ENCODE measurements at regions of chr13 and their contacts with region 1.

Region 1: DNA sequence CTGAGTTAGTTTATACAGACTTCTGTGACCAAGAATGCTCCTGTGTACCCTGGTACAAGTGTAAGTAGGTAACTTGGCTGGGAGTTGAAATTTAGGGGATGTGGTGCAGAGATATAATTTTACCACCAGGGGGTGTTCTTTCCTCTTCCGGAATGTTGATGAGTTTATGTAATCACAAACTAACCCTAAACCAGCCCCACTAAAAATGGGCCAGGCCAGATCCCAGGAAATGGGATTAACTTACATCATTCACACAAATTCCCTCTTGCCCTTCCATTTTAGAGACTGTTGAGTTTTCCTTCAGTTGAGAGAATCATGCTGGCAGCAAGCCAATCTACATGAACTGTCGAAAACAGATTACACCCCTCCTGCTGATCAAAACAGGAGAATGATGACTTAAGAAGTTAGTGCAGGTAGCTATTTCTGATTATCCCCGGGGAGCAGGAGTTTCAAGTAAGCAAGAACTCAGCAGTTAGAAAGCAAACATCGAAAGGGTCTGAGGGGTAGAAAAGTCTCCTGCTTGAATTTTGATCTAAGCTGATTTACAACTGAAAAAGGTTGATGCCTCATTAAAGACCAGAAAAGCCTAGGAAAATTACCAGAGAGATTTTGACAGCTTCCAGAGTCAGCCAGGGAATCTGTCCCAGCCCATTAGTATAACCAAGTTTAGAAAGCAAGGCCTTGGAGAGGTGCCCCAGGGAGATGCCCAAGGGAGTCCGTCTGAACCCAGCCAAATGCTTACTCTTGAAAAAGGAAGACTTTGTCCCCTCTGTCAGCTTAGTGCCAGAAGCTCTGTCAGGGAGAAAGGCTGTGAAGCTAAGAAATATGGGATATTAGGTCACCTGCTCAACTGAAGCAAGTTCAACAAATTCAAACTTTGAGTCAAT is 32.3 kb upstream of the MED4 start:
- DNase-seq: no peak

Region 2: DNA sequence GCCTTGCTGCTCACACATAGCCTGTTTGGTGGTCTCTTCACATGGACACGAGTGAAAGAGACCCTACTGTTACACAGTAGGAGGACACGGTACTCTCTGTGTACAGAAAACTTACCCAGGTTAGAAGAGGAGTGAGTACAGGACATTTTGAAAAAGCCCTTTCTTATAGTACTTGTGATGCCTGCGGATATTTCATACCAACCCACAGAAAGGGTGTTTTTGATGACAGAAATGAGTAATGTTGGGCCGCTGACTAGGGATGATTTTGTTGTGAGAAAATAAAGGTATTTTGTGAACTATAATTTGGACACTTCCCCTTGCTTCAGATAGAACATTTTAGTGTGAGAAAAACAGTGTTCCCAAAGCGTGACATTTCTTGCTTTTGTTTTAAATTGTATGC is 71.5 kb before region 1 on chr13:
- intact Hi-C with region 1: no loop called
- DNase-seq: no peak

Region 3: GRCh38 chr13:48144413-48145035 is 17.3 kb after region 1 on chr13:
- intact Hi-C with region 1: no loop called
- DNase-seq: no peak

Region 4: GRCh38 chr13:48194379-48194754 is 67.2 kb after region 1 on chr13:
- intact Hi-C with region 1: no loop called
- DNase-seq: no peak

Region 5: DNA sequence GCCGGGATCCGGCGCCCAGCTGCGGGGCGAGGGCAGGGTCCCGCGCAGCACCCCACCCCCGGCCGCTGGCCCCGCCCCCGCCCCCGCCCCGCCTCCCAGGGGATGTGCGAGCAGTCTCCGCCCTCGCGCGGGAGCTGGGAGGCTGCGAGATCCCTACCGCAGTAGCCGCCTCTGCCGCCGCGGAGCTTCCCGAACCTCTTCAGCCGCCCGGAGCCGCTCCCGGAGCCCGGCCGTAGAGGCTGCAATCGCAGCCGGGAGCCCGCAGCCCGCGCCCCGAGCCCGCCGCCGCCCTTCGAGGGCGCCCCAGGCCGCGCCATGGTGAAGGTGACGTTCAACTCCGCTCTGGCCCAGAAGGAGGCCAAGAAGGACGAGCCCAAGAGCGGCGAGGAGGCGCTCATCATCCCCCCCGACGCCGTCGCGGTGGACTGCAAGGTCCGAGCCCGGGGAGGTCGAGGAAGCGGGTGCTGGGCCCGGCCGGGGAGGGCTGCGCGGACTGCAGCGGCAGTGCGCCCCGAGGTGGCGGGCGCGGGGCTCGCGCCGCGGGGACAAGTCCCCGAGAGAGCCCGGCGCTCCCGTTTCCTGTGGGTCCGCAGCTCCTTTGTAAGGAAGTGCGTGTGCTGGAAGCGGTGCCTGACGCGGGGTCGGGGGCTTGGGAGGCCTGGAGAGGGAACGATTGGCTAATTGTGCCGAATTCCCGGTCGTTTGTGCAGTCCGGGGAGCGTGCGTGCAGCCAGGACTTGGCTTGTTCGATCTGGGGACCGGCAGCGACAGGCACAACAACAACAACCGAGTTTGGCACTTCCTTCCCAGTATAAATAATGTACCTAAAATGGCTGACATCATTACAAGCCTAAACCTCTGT is 106.1 kb after region 1 on chr13 and contains the start of gene ITM2B:
- intact Hi-C with region 1: loop called in 1 of 2 experiments (anchors 5 kb)
- DNase-seq: peak; percentile 95
- total RNA-seq, gene ITM2B: 425 to 605 TPM

Region 6: DNA sequence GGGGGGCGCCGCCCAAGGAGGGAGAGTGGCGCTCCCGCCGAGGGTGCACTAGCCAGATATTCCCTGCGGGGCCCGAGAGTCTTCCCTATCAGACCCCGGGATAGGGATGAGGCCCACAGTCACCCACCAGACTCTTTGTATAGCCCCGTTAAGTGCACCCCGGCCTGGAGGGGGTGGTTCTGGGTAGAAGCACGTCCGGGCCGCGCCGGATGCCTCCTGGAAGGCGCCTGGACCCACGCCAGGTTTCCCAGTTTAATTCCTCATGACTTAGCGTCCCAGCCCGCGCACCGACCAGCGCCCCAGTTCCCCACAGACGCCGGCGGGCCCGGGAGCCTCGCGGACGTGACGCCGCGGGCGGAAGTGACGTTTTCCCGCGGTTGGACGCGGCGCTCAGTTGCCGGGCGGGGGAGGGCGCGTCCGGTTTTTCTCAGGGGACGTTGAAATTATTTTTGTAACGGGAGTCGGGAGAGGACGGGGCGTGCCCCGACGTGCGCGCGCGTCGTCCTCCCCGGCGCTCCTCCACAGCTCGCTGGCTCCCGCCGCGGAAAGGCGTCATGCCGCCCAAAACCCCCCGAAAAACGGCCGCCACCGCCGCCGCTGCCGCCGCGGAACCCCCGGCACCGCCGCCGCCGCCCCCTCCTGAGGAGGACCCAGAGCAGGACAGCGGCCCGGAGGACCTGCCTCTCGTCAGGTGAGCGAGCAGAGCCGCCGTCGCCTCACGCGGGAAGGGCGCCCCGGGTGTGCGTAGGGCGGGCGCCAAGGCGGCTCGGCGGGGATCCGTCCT is 176.4 kb after region 1 on chr13 and contains the start of gene RB1:
- intact Hi-C with region 1: loop called in 1 of 2 experiments (anchors 10 kb)
- DNase-seq: peak; percentile 98
- total RNA-seq, gene RB1: 33.3 to 35.9 TPM

Measured in posterior vena cava (tissue), 2 donors.